Activated CD4-positive, alpha-beta T cell treated with anti-CD3 and anti-CD28 coated beads for 36 hours (primary cell): ENCODE measurements at regions of chr19 and their contacts with region 1.

Region 1: DNA sequence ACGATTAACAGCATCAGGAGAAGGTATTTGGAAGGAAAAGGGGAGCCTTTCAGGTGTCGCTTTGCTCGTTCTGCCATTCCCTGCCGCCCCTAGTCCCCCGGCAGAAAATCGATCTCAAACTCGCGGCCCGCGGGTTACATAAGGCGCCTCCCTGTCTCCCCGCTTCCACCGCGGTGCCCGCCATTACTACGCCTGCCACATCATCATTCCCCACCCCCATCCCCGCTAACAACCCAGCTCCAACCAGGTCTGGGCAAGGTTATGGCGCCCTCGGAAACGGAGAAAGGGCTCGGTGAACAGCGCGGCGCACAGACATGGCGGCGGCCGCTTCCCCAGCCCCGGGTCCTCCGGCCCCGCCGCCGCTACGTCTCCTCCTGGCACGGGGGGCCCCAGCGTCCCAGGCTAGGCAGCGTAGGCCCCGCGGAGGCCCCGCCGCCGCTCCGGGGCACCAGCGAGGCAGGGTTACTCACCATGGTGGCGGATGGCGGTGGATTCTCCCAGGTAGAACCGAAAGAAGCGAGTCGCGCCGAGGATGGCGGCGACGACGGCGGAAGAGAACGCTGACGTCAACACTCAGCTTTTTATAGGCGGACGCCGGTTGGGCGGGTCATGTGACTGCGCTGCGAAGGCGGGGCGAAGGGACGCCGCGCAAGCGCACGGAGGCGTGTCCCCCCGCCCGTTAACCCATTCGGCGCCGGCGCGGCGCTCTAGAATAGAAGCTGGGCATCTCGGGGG is at the start of gene EEF2:
- DNase-seq: peak; percentile 94
- ATAC-seq: peak; percentile 45
- H3K4me3 Mint-ChIP-seq: peak within 1 kb of the TSS; percentile 87
- H3K27ac Mint-ChIP-seq: peak within 1 kb of the TSS; percentile 94
- H3K4me1 Mint-ChIP-seq: peaks cover 52% of the 10 kb centered on the region
- H3K27me3 Mint-ChIP-seq: no peaks in the 10 kb centered on the region
- total RNA-seq, gene EEF2: 3,116 to 3,255 TPM

Region 2: DNA sequence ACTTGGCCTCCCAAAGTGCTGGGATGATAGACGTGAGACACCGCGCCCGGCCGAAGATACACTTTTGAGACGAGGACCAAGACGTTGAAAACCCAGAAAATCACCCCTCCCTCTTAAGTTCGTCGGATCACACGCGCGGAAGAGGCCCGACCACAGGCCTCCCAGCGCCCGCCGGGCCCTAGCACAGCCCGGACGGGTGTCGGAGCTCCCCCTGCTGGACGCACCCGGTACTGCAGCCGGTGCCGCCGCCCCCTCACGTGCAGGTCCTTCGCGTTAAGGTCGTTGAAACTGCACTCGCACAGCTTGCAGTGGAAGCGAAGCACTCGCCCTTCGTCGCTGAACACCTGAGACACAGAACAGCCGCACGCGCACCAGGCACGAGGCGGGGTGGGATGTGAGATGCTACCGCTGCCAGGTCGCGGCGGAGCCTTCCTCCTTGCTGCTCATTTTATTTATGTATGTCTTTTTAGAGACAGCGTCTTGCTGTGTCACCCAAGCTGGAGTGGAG is 163.2 kb before region 1 on chr19:
- CTCF ChIA-PET with region 1: no interaction called
- POLR2A ChIA-PET with region 1: interaction called, 4 read pairs
- intact Hi-C with region 1: loop called in 1 of 2 experiments (anchors 2 kb)
- DNase-seq: peak; percentile 94
- ATAC-seq: peak; percentile 78
- H3K4me3 Mint-ChIP-seq: no peak overlapping the region
- H3K27ac Mint-ChIP-seq: no peak overlapping the region
- H3K4me1 Mint-ChIP-seq: peaks cover 23% of the 10 kb centered on the region
- H3K27me3 Mint-ChIP-seq: no peaks in the 10 kb centered on the region

Region 3: GRCh38 chr19:3960977-3961376 is 24.1 kb before region 1 on chr19:
- CTCF ChIA-PET with region 1: no interaction called
- POLR2A ChIA-PET with region 1: no interaction called
- intact Hi-C with region 1: no loop called
- DNase-seq: no peak
- ATAC-seq: no peak
- H3K4me3 Mint-ChIP-seq: no peak overlapping the region
- H3K27ac Mint-ChIP-seq: no peak overlapping the region
- H3K4me1 Mint-ChIP-seq: no peaks in the 10 kb centered on the region
- H3K27me3 Mint-ChIP-seq: no peaks in the 10 kb centered on the region

Region 4: DNA sequence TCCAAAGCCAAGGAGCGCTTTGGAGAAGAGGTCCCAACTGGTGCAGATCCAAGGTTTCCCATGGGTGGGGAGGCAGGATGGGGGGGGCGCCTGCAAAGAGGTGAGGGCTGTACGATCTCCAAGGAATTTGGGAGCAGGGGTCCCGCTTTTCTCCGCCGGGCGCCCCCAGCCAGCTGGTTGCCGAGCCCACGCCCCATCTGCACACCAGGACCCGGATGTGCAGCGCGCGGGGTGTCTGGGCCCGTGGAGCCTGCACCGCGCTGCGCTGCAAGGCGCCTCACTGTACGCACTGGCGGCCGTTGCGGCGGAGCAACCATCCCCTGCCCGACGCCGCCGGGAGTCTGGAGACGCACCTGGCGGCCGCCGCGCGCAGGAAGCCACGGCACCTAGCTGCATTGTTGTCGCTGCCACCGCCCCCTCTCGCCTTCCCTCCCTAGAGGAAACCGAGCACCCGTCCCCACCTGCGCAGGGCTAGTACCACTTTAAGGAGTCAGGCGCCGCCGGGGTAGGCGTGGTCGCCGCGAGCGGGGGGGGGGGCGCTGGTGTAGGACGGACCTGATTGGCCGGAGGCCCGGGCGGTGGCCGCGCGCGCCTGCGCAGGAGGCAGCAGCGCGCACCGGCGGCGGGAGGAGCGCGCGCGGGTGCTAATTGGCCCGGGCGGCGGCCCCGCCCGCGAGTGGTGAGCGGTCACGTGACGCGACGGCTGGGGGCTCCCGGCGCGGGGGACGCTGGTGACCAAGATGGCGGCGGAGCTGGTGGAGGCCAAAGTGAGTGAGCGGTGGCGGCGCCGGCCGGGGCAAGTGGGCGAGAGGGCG is 22.2 kb after region 1 on chr19 and contains the start of gene PIAS4:
- CTCF ChIA-PET with region 1: interaction called, 11 read pairs
- POLR2A ChIA-PET with region 1: interaction called, 6 read pairs
- intact Hi-C with region 1: loop called (anchors 1 kb)
- DNase-seq: peak; percentile 97
- ATAC-seq: peak; percentile 92
- H3K4me3 Mint-ChIP-seq: peak within 1 kb of the TSS; percentile 75
- H3K27ac Mint-ChIP-seq: peak within 1 kb of the TSS; percentile 71
- H3K4me1 Mint-ChIP-seq: peaks cover 27% of the 10 kb centered on the region
- H3K27me3 Mint-ChIP-seq: no peaks in the 10 kb centered on the region
- total RNA-seq, gene PIAS4: 23.0 to 37.3 TPM

Region 5: DNA sequence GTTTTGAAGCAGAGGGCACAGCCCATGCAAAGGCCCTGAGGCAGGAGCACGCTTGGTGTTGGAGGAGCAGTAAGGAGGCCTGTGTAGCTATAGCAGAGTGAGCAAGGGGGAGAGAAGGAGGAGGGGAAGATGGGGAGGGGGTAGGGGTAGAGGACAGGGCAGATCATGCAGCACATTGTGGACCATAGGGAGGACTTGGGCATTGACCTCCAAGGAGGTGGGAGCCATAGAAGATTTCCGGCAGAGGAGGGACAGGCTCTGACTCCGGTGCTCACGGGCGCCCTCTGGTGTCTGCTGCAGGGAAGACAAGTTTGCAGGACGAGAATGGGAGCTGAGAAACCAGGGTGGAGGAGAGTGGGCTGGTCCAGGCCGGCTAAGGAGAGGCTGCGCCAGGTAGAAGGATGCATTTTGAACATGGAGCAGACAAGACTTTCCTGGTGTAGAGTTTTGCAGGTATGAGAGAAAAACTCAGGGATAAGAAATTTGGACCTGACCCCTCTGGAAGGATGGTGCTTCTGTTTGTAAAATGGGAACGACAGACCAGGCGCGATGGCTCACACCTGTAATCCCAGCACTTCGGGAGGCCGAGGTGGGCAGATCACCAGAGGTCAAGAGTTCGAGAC is 154.7 kb after region 1 on chr19:
- CTCF ChIA-PET with region 1: interaction called, 12 read pairs
- POLR2A ChIA-PET with region 1: no interaction called
- intact Hi-C with region 1: loop called (anchors 1 to 5 kb)
- DNase-seq: peak; percentile 94
- ATAC-seq: peak; percentile 92
- H3K4me3 Mint-ChIP-seq: peak overlapping the region; percentile 23
- H3K27ac Mint-ChIP-seq: peak overlapping the region; percentile 34
- H3K4me1 Mint-ChIP-seq: peaks cover 10% of the 10 kb centered on the region
- H3K27me3 Mint-ChIP-seq: peaks cover 3% of the 10 kb centered on the region

Region 6: DNA sequence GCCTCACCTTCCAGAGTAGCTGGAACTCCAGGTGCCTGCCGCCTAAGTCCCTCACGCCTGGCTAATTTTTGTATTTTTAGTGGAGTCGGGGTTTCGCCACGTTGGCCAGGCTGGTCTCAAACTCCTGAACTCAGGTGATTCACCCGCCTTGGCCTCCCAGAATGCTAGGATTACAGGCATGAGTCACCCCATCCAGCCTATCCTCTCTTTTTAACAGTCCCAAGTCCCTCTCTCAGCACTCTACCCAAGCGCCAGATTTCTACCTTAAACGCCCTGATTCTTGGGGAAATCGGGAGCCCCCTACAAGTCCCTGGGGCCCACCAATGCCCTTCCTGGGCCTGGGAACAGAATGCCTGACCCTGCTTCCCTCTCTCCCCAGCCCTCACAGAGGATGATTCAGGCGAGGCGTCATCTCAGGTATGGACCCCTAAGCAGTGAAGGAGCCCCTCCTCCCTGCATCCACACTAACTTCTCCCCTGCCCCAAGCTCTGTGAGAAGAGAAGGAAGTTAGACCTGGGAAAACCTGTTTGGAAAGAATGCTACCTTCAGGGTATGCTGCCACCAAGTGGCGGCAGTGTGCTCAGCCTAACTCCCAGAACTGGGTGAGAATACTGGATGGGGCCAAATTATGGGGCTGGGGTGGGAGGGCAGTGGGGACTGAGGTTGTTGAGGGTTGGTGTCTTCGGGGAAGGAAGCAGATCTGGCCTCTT is 223.5 kb after region 1 on chr19:
- CTCF ChIA-PET with region 1: interaction called, 3 read pairs
- POLR2A ChIA-PET with region 1: no interaction called
- intact Hi-C with region 1: loop called (anchors 1 kb)
- DNase-seq: no peak
- ATAC-seq: no peak
- H3K4me3 Mint-ChIP-seq: no peak overlapping the region
- H3K27ac Mint-ChIP-seq: no peak overlapping the region
- H3K4me1 Mint-ChIP-seq: no peaks in the 10 kb centered on the region
- H3K27me3 Mint-ChIP-seq: peaks cover 5% of the 10 kb centered on the region

Region 7: GRCh38 chr19:5690125-5690954 is 1705.3 kb after region 1 on chr19 and contains the start of gene RPL36:
- CTCF ChIA-PET with region 1: no interaction called
- POLR2A ChIA-PET with region 1: no interaction called
- intact Hi-C with region 1: loop called in 1 of 2 experiments (anchors 10 kb)
- DNase-seq: peak; percentile 100
- ATAC-seq: peak; percentile 54
- H3K4me3 Mint-ChIP-seq: peak within 1 kb of the TSS; percentile 100
- H3K27ac Mint-ChIP-seq: peak within 1 kb of the TSS; percentile 96
- H3K4me1 Mint-ChIP-seq: peaks cover 21% of the 10 kb centered on the region
- H3K27me3 Mint-ChIP-seq: no peaks in the 10 kb centered on the region
- total RNA-seq, gene RPL36: 1,452 to 1,530 TPM